ENCODE measurements at regions of chr14 and their contacts with region 1.

Region 1: GRCh38 chr14:43003845-43004244 is 1397.2 kb downstream of the LRFN5 start:
- DNase-seq: no peak
- ATAC-seq: no peak

Region 2: GRCh38 chr14:42229976-42230375 is 773.9 kb before region 1 on chr14:
- intact Hi-C with region 1: loop called (anchors 5 kb)
- DNase-seq: no peak
- ATAC-seq: no peak

Region 3: GRCh38 chr14:42884100-42884499 is 119.7 kb before region 1 on chr14:
- intact Hi-C with region 1: no loop called
- DNase-seq: no peak
- ATAC-seq: no peak

Region 4: GRCh38 chr14:42980419-42980818 is 23.4 kb before region 1 on chr14:
- intact Hi-C with region 1: no loop called
- DNase-seq: no peak
- ATAC-seq: no peak

Region 5: GRCh38 chr14:43087666-43088065 is 83.8 kb after region 1 on chr14:
- intact Hi-C with region 1: no loop called
- DNase-seq: no peak
- ATAC-seq: no peak

Region 6: GRCh38 chr14:43297794-43298193 is 293.9 kb after region 1 on chr14:
- intact Hi-C with region 1: no loop called
- DNase-seq: no peak
- ATAC-seq: no peak

Measured in left ventricle myocardium superior (tissue), 1 donor.